Right ventricle myocardium inferior (tissue), 1 donor: ENCODE measurements at regions of chr17 and their contacts with region 1.

Region 1: DNA sequence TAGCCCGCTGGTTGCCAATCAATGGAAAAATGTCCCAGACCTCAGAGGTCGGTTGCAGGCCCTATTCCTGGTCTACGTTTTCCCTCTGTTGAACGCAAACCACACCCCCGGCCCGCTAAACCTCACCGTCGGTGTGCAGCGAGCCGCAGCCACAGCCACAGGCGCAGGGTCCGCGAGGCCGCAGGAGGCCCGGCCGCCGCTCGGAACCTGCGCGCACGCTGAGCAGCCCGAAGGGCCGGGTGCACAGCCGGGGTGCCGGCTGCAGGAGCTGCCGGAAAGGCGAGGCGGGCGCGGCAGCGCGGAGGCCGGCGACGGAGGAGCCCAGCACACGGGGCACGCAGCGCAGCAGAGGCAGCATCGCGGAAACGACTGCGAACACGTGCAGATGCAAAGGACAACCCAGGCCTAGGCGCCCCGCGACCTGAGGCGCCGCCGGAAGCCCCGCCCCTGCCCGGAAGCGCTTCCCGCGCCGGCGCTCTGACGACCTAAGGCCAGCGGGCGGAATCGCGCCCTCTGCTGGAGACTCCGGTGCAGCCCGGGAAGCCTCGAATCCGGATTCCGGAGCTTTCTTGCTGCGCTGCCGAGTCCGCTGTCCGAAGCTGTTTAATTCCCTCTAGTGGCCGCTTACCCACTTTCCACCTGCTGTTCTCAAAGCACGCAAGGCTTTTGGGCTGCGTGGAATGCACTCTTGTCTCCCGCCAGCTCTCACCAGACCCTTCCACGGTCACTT is at the start of gene C1QBP:
- DNase-seq: peak; percentile 95
- ATAC-seq: peak; percentile 96
- total RNA-seq, gene C1QBP: 136 TPM

Region 2: GRCh38 chr17:5191541-5192417 is 247.1 kb before region 1 on chr17 and contains the start of gene ZNF594:
- intact Hi-C with region 1: loop called (anchors 10 kb)
- DNase-seq: peak; percentile 98
- ATAC-seq: peak; percentile 100
- total RNA-seq, gene ZNF594: 7.2 TPM

Region 3: DNA sequence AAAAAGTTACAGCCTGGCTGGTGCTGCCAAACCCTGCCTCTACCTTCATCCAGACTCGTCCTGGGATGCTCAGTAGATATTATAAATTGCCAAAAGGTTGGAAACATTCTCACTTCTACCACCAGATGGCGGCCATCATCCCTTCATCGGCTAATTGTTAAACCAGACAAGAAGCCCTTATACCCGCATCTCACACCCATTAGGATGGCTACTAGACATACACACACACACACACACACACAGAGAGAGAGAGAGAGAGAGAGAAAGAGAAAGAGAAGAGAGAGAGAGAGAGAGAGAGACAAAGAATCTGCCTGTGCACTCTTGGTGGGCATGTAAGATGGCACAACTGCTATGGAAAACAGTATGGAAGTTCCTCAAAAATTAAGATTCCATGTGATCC is 189.3 kb before region 1 on chr17:
- intact Hi-C with region 1: loop called (anchors 10 kb)
- DNase-seq: no peak
- ATAC-seq: peak; percentile 73

Region 4: DNA sequence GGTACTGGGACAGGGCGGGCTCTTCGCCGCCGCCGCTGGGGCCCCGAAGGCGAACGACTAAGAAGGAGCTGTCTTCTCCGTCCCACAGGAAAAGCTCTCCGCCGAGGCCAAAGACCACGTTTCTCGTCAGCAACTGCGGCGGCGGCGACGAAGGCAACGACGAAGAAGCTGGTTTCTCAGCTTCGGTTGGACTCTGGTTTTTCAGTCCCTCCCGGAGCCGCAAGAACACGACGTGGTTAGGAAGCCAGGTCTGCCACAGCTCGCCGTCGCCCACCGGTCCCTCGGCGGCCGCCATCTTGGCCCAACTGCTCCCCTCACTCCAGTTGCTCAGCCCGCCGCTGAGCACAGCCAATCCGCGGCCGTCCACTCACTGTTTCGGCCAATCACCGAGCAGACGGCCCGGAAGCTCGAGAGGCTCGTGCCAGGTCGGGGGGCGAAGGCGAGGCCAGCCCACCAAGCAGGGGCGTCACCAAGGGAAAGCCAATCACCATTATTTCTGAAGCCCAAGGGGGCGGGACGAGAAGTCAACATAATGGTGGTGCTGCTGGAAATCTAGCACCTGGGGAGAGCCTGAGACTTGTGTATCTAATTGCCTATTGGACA is 19.4 kb before region 1 on chr17 and contains the start of gene NUP88:
- intact Hi-C with region 1: no loop called
- DNase-seq: peak; percentile 97
- ATAC-seq: peak; percentile 99
- total RNA-seq, gene NUP88: 34.2 TPM

Region 5: DNA sequence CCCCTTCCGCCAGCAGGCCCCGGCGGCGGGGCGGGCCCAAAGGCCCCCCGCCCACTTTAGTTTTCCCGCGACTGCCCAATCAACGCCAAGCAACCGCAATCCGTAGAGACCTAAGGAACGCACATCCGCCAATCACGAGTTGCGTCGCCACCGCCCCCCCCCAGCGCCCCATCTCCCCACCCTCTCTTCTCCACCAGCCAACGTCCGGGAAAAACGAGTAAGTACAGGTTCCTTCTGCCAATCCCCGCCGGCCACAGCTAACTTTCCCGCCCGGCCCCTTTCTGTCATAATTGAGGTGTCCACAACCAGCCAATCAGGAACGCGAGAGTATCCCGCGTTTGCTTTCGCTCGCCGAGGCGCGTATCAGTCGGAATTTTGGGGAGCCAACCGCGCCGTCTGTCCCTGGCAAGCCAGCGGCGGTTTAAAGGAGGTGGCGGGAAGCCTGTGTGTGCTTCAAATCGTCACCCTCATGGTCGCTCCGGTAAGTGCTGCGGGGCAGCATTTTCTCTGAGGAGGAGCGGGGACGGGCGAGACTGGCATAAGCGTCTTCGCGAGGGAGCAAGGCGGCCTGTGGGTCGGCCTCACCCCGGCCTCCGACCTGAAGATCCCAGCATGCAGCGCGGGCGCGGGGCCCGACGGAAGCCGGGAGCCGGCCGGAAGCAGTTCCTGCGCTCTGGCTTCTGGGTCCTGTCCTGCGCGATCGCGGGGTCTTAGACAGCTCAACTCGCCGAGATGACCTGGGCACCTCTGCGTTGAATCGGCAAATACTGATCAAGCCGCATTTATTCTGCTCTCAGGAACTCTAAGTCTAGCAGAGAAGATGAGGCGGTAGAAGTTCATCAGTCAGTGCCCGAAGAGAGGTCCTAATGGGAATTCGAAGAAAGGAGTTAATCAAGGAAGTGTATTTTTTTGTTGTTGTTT is 47.6 kb after region 1 on chr17 and contains the start of gene MIS12:
- intact Hi-C with region 1: no loop called
- DNase-seq: peak; percentile 99
- ATAC-seq: peak; percentile 96
- total RNA-seq, gene MIS12: 11.4 TPM

Region 6: GRCh38 chr17:5522476-5522875 is 83.6 kb after region 1 on chr17:
- intact Hi-C with region 1: no loop called
- DNase-seq: no peak
- ATAC-seq: no peak

Region 7: DNA sequence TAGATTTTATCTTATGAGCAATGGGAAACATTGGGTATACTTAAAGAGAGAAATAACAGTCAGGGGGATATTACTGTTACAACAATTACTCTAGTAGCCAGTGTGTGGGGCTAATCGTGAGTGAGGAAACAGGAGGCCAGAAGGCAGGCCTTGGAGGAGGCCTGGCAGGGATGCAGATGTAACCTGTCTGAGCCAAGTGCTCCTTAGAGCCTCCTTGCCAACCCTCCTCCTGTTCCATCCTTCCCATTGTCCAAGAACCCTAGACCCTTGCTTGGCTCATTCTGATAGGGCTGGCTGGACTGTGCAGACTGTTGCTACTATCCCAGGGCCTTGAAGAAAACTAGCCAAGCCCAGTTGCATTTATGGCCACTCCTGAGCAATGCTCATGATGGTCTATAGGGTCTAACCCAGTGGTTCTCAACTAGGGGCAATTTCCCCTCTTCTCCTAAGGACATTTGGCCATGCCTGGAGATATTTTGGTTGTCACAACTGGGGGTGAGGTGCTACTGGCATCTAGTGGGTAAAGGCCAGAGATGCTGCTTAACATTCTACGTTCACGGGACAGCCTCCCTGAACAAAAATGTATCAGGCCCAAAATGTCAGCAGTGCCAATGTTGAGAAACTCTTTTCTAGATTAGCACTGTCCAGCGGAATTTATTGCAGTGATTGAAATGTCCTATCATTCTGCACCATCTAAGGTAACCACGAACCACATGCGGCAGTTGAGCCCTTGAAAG is 606.9 kb after region 1 on chr17:
- intact Hi-C with region 1: no loop called
- DNase-seq: no peak
- ATAC-seq: no peak